B cell (primary cell): ENCODE measurements at regions of chr1 and their contacts with region 1.

Region 1: GRCh38 chr1:111448918-111449702 is at the starts of genes ATP5PB and WDR77:
- DNase-seq: peak; percentile 96
- ATAC-seq: peak; percentile 95
- H3K4me3 ChIP-seq: peak within 1 kb of the TSS; percentile 76 to 94 (median 85)
- H3K4me3 Mint-ChIP-seq: peak within 1 kb of the TSS; percentile 100
- H3K27ac ChIP-seq: peak within 1 kb of the TSS; percentile 60 to 95
- H3K27ac Mint-ChIP-seq: peak within 1 kb of the TSS; percentile 99
- H3K4me1 ChIP-seq: peaks cover 41 to 48% of the 10 kb centered on the region in 2 donors
- H3K4me1 Mint-ChIP-seq: peaks cover 73% of the 10 kb centered on the region
- H3K27me3 ChIP-seq: no peaks in the 10 kb centered on the region
- H3K27me3 Mint-ChIP-seq: no peaks in the 10 kb centered on the region
- CTCF ChIP-seq: no peak
- total RNA-seq, gene ATP5PB: 110 and 113 TPM in 2 replicates
- total RNA-seq, gene WDR77: 40.5 and 41.4 TPM in 2 replicates

Region 2: GRCh38 chr1:111471012-111471411 is 21.9 kb after region 1 on chr1:
- CTCF ChIA-PET with region 1: interaction called, 9 read pairs
- POLR2A ChIA-PET with region 1: interaction called, 8 read pairs
- intact Hi-C with region 1: loop called (anchors 1 kb)
- DNase-seq: peak; percentile 92
- ATAC-seq: peak; percentile 94
- H3K4me3 ChIP-seq: peak overlapping the region in 3 of 5 experiments; percentile 10 to 52 (median 36)
- H3K4me3 Mint-ChIP-seq: no peak overlapping the region
- H3K27ac ChIP-seq: peak overlapping the region; percentile 88 to 92
- H3K27ac Mint-ChIP-seq: no peak overlapping the region
- H3K4me1 ChIP-seq: peaks cover 55% of the 10 kb centered on the region in 2 donors
- H3K4me1 Mint-ChIP-seq: peaks cover 30% of the 10 kb centered on the region
- H3K27me3 ChIP-seq: no peaks in the 10 kb centered on the region
- H3K27me3 Mint-ChIP-seq: no peaks in the 10 kb centered on the region
- CTCF ChIP-seq: no peak

Region 3: GRCh38 chr1:111755331-111756123 is 306.4 kb after region 1 on chr1 and contains the start of gene DDX20:
- CTCF ChIA-PET with region 1: interaction called, 3 read pairs
- POLR2A ChIA-PET with region 1: interaction called, 3 read pairs
- intact Hi-C with region 1: loop called (anchors 1 kb)
- DNase-seq: peak; percentile 98
- ATAC-seq: peak; percentile 92
- H3K4me3 ChIP-seq: peak within 1 kb of the TSS; percentile 62 to 95 (median 74)
- H3K4me3 Mint-ChIP-seq: peak within 1 kb of the TSS; percentile 88
- H3K27ac ChIP-seq: peak within 1 kb of the TSS; percentile 91 to 96
- H3K27ac Mint-ChIP-seq: peak within 1 kb of the TSS; percentile 94
- H3K4me1 ChIP-seq: peaks cover 14 to 16% of the 10 kb centered on the region in 2 donors
- H3K4me1 Mint-ChIP-seq: peaks cover 31% of the 10 kb centered on the region
- H3K27me3 ChIP-seq: no peaks in the 10 kb centered on the region
- H3K27me3 Mint-ChIP-seq: no peaks in the 10 kb centered on the region
- CTCF ChIP-seq: peak; percentile 95
- total RNA-seq, gene DDX20: 22.3 and 24.6 TPM in 2 replicates